Breast epithelium (tissue), 4 donors: ENCODE measurements at regions of chr6 and their contacts with region 1.

Region 1: DNA sequence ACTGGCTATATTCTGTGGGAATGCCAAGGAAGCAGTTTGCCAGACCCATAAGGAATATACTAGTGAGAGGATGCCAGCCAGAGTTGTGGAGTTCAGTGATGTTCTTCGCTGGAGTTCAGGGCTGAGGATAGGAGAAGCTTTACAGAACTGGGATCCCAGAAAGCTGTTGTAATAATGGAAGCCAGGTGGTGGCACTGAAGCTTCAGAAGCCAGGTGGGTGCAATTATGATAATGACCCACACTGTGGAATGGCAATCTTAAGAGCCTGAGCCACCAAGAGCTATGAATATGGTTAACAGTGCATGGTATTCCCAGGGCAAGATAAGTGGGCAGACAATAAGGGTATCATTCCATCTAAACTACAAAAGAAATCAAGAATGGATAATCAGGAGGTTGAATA is 25.1 kb upstream of the ENPP1 start:
- DNase-seq: no peak
- H3K4me3 ChIP-seq: no peak overlapping the region
- H3K27ac ChIP-seq: no peak overlapping the region
- H3K4me1 ChIP-seq: no peaks in the 10 kb centered on the region
- H3K27me3 ChIP-seq: no peaks in the 10 kb centered on the region
- CTCF ChIP-seq: peak in 1 of 3 donors; percentile 21
- POLR2A ChIP-seq: no peak

Region 2: GRCh38 chr6:131635384-131636340 is 147.1 kb before region 1 on chr6:
- intact Hi-C with region 1: no loop called
- DNase-seq: no peak
- H3K4me3 ChIP-seq: no peak overlapping the region
- H3K27ac ChIP-seq: no peak overlapping the region
- H3K4me1 ChIP-seq: no peaks in the 10 kb centered on the region
- H3K27me3 ChIP-seq: no peaks in the 10 kb centered on the region
- CTCF ChIP-seq: no peak
- POLR2A ChIP-seq: no peak

Region 3: DNA sequence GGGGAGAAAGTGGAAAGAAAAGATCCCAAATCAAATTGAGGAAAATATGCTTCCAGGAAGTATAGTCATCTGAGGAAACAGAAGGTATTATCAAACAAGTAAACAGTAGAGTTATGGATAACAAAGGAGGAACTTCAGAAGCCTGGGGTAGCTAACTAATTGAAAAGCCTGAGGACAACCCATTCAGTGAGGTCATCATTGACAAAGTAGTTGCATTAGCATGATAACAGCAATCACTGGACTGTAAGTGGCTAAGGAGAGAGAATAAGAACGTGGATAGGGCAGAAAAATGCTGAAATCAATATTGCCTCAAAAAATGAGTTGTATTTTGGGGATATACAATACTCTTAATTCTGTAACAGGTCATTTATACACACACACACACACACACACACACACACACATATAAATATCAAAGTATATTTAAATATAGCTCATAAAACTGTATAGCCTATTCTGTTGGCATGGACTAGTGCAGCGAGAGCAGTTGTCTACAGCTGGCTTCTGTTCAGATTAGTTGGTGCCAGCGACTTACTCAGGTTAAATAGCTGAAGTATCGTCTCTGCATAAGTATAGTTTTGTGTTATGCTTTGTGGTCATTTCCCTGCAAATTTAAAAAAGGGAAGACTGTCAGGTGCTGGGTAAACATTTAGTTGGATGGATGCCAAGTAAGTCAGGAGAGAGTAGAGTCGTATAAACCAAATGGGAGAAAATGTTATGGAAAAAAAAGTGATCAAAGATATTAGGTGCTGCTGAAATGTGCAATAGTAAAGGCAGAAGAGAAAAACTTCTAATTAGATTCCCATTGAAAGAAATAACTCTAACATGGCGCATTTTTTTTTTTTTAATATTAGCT is 38.1 kb before region 1 on chr6:
- intact Hi-C with region 1: loop called (anchors 5 kb)
- DNase-seq: no peak
- H3K4me3 ChIP-seq: no peak overlapping the region
- H3K27ac ChIP-seq: no peak overlapping the region
- H3K4me1 ChIP-seq: no peaks in the 10 kb centered on the region
- H3K27me3 ChIP-seq: no peaks in the 10 kb centered on the region
- CTCF ChIP-seq: no peak
- POLR2A ChIP-seq: no peak